ENCODE measurements at regions of chr13 and their contacts with region 1.

Region 1: DNA sequence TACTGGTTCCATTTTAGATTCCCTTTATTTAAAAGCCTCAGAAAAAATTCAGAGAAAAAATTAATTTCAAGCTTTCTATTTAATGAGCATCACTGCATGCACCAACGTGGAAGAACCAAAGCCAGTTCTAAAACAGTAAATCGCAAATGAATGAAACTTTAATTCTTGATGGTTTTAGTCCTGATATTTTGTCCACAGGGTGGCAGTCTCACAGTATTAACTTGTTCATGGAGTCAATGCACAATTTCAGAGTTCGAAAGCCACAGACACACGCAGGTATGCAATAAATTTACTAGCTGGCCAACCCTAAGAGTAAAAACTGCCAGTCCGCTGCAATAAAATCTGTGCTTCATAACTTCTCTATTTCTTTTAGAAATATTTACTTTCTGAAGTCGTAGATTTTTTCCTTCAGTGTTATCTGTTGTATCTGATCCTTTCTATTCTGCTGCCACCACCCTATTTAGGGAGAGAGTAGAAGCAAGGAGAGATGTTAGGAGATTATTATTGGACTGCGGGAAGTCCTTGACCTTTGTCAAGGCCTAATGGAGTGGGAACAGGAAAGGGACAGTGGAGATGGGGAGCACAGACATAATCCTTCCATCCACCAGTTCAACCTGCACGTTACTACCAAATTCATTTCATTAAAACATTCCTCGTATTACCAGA is 7.0 kb upstream of the WBP4 start:
- DNase-seq: peak; percentile 37
- ATAC-seq: peak; percentile 63
- H3K4me3 ChIP-seq: peak overlapping the region; percentile 22; the same call in 1 of the 2 replicates
- H3K27ac ChIP-seq: peak overlapping the region; percentile 40; the same call in 1 of the 2 replicates
- H3K4me1 ChIP-seq: peaks cover 6% of the 10 kb centered on the region; the same call in 1 of the 2 replicates
- H3K27me3 ChIP-seq: no peaks in the 10 kb centered on the region
- CTCF ChIP-seq: peak; percentile 38 to 66 (median 54); a peak in 5 of 6 replicates
- EP300 ChIP-seq: no peak
- POLR2A ChIP-seq: no peak
- RAD21 ChIP-seq: peak; percentile 59

Region 2: DNA sequence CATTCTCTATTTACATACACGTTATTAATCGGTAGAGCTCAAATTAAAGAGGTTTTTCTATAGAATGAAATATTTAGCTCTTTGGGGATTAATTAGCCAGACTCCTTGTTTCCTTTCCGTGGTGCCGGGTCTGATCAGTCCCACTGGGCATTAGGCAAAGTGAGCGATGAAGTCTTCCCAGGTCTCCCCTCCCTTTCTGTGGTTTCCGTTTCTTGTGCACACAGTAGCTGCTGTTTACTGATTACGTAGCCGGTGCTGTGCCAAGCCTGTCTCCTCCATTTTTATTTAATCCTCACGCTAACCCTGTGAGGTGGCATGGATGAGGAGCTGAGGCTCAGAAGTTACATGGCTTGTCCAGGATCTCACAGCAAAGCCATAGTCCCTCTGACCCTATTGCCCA is 256.0 kb before region 1 on chr13:
- CTCF ChIA-PET with region 1: no interaction called
- POLR2A ChIA-PET with region 1: no interaction called
- RAD21 ChIA-PET with region 1: no interaction called
- SMC1A ChIA-PET with region 1: no interaction called
- in situ Hi-C with region 1: no loop called
- intact Hi-C with region 1: no loop called
- DNase-seq: no peak
- ATAC-seq: no peak
- H3K4me3 ChIP-seq: no peak overlapping the region
- H3K27ac ChIP-seq: no peak overlapping the region
- H3K4me1 ChIP-seq: no peaks in the 10 kb centered on the region; the same call in 1 of the 2 replicates
- H3K27me3 ChIP-seq: no peaks in the 10 kb centered on the region
- CTCF ChIP-seq: no peak
- EP300 ChIP-seq: no peak
- POLR2A ChIP-seq: no peak
- RAD21 ChIP-seq: no peak

Region 3: GRCh38 chr13:40974460-40975407 is 79.6 kb before region 1 on chr13:
- CTCF ChIA-PET with region 1: interaction called, 128 read pairs
- POLR2A ChIA-PET with region 1: interaction called, 14 read pairs
- RAD21 ChIA-PET with region 1: interaction called, 172 read pairs
- SMC1A ChIA-PET with region 1: interaction called, 75 read pairs
- in situ Hi-C with region 1: loop called (anchors 5 kb)
- intact Hi-C with region 1: loop called (anchors 5 kb)
- DNase-seq: no peak
- ATAC-seq: peak; percentile 78
- H3K4me3 ChIP-seq: peak overlapping the region; percentile 34
- H3K27ac ChIP-seq: peak overlapping the region; percentile 56
- H3K4me1 ChIP-seq: peaks cover 38% of the 10 kb centered on the region
- H3K27me3 ChIP-seq: no peaks in the 10 kb centered on the region
- CTCF ChIP-seq: peak; percentile 69 to 80 (median 70)
- EP300 ChIP-seq: no peak
- POLR2A ChIP-seq: 0 out of 2 replicates have a peak, but pooled peaks have one; percentile 16
- RAD21 ChIP-seq: peak; percentile 77

Region 4: GRCh38 chr13:41004875-41005693 is 49.3 kb before region 1 on chr13:
- CTCF ChIA-PET with region 1: interaction called, 55 read pairs
- POLR2A ChIA-PET with region 1: interaction called, 6 read pairs
- RAD21 ChIA-PET with region 1: interaction called, 14 read pairs
- SMC1A ChIA-PET with region 1: interaction called, 10 read pairs
- in situ Hi-C with region 1: no loop called
- intact Hi-C with region 1: no loop called
- DNase-seq: peak; percentile 79
- ATAC-seq: peak; percentile 72
- H3K4me3 ChIP-seq: peak overlapping the region; percentile 18; the same call in 1 of the 2 replicates
- H3K27ac ChIP-seq: peak overlapping the region; percentile 78
- H3K4me1 ChIP-seq: peaks cover 53% of the 10 kb centered on the region
- H3K27me3 ChIP-seq: no peaks in the 10 kb centered on the region
- CTCF ChIP-seq: no peak
- EP300 ChIP-seq: peak; percentile 80 to 83
- POLR2A ChIP-seq: no peak
- RAD21 ChIP-seq: 0 out of 2 replicates have a peak, but pooled peaks have one; percentile 7

Region 5: GRCh38 chr13:41032691-41033376 is 21.5 kb before region 1 on chr13:
- CTCF ChIA-PET with region 1: interaction called, 5 read pairs
- POLR2A ChIA-PET with region 1: interaction called, 3 read pairs
- RAD21 ChIA-PET with region 1: interaction called, 11 read pairs
- SMC1A ChIA-PET with region 1: interaction called, 5 read pairs
- in situ Hi-C with region 1: no loop called
- intact Hi-C with region 1: no loop called
- DNase-seq: no peak
- ATAC-seq: peak; percentile 76
- H3K4me3 ChIP-seq: no peak overlapping the region
- H3K27ac ChIP-seq: no peak overlapping the region
- H3K4me1 ChIP-seq: no peaks in the 10 kb centered on the region
- H3K27me3 ChIP-seq: no peaks in the 10 kb centered on the region
- CTCF ChIP-seq: no peak
- EP300 ChIP-seq: no peak
- POLR2A ChIP-seq: no peak
- RAD21 ChIP-seq: no peak

Region 6: DNA sequence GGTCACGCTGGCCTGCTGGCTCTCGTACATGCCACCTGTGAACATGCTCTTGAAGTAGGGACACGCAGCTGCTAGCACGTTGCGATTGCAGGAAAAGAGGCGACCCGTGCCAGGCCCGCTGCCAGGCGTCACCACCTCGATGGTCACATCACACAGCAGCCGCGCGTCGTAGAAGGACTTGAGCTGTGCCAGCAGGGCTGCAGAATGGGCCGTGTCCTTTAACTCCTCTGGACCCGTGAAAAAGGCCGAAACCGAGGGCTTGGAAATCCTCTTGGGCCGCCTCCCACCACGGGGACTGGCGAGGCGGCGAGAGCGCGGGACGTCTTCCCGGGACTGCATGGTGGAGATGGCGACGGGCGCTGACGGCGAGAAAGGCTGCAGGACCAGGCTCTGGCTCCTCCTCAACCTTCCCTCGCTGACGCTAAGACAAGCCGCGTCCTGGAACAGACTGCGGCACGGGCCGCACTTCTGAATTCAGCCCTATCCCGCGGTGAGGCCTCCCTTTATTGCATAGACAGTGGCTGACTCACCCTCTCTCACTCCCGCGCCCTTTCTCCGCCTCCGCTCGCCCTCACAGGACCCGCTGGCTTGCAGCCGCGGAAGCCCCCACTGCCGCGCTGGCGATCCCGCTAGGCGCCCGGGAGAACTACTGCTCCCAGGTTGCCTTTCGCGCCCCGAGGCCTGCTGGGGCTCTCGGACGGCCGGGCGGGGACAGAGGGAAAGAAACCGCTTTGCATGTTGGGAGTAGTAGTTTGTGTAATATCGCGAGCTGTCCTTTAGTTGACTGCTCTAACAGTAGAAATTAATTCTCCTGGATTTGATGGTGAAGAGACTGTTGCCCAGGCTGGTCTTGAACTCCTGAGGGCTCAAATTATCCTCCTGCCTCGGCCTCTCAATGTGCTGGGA is 139.8 kb after region 1 on chr13 and contains the start of gene KBTBD7:
- CTCF ChIA-PET with region 1: interaction called, 19 read pairs
- POLR2A ChIA-PET with region 1: no interaction called
- RAD21 ChIA-PET with region 1: interaction called, 6 read pairs
- SMC1A ChIA-PET with region 1: interaction called, 4 read pairs
- in situ Hi-C with region 1: no loop called
- intact Hi-C with region 1: no loop called
- DNase-seq: peak; percentile 67
- ATAC-seq: peak; percentile 99
- H3K4me3 ChIP-seq: peak within 1 kb of the TSS; percentile 86
- H3K27ac ChIP-seq: peak within 1 kb of the TSS; percentile 69
- H3K4me1 ChIP-seq: peaks cover 4% of the 10 kb centered on the region
- H3K27me3 ChIP-seq: no peaks in the 10 kb centered on the region
- CTCF ChIP-seq: no peak
- EP300 ChIP-seq: no peak
- POLR2A ChIP-seq: peak; percentile 76
- RAD21 ChIP-seq: no peak
- polyA plus RNA-seq, gene KBTBD7: 1.8 to 2.8 TPM